ENCODE measurements at regions of chr4 and their contacts with region 1.

Region 1: DNA sequence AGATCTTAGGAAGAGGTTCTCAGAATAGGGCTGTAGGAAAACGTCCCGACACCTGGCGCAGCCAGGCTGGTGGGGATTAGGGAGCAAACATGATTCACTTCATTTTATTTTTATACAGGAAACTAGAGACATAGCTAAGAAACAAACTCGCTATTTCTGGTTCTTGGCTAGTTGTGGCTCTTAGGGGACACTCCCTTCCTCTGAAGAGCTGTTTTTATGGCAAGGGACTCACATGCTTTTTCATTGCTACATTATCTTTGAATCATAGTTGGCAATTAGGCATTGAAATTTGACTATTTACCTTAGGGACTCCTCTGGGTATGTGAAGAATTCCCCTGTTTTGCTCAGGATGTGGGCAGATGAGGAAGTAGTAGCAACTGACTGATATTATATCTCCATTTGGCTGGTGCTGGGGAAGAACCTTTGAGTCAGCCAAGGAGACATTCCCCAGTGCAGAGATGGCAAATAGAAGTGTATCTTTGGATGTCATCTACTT is 174.5 kb downstream of the SMIM20 start:
- DNase-seq: peak; percentile 23 to 49
- ATAC-seq: peak; percentile 66
- H3K4me3 ChIP-seq: no peak overlapping the region
- H3K27ac ChIP-seq: peak overlapping the region; percentile 53 to 67 (median 60)
- H3K4me1 ChIP-seq: peaks cover 26 to 36% of the 10 kb centered on the region in 2 donors
- H3K27me3 ChIP-seq: no peaks in the 10 kb centered on the region
- CTCF ChIP-seq: no peak
- POLR2A ChIP-seq: no peak

Region 2: DNA sequence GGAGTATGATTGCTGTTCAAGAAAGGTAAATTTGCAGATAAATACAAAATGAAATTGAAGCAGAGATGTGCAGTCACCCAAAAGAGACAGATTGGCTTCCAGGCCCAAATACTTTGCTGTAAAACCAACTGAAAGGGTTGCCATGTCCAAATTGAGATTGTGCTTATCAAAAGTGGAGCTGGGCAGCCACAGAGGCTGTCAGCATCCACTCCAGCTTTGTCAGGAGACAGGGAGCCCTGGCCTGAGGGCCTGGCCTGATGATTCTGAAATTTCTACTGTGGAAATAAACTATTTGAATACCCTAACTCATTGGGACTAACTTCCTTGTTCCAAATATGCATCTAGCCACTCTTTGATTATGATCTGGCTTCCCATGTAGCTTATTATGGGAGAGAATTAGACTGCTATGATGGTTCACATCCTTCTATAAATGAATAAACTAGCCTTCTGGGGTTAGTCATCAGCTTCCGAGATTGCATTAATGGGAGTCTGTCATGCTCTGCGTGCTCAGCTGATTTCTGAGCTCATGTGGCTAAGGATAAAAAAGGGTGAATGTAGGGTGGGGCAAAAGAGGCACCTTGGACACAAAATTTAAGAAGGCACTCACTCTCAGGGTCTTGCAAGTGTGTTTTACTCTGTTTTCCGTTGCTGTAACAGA is 384.6 kb before region 1 on chr4:
- in situ Hi-C with region 1: no loop called
- intact Hi-C with region 1: no loop called
- DNase-seq: no peak
- ATAC-seq: no peak
- H3K4me3 ChIP-seq: no peak overlapping the region
- H3K27ac ChIP-seq: no peak overlapping the region
- H3K4me1 ChIP-seq: no peaks in the 10 kb centered on the region
- H3K27me3 ChIP-seq: no peaks in the 10 kb centered on the region
- CTCF ChIP-seq: no peak
- POLR2A ChIP-seq: no peak

Region 3: GRCh38 chr4:26204911-26205370 is 116.5 kb after region 1 on chr4:
- in situ Hi-C with region 1: no loop called
- intact Hi-C with region 1: loop called (anchors 5 kb)
- DNase-seq: peak; percentile 47 to 87
- ATAC-seq: peak; percentile 81 to 88
- H3K4me3 ChIP-seq: no peak overlapping the region
- H3K27ac ChIP-seq: peak overlapping the region; percentile 16 to 61 (median 38)
- H3K4me1 ChIP-seq: peaks cover 16 to 21% of the 10 kb centered on the region in 2 donors
- H3K27me3 ChIP-seq: no peaks in the 10 kb centered on the region
- CTCF ChIP-seq: no peak
- POLR2A ChIP-seq: no peak

Region 4: GRCh38 chr4:26362745-26363439 is 274.4 kb after region 1 on chr4:
- in situ Hi-C with region 1: no loop called
- intact Hi-C with region 1: no loop called
- DNase-seq: no peak
- ATAC-seq: no peak
- H3K4me3 ChIP-seq: no peak overlapping the region
- H3K27ac ChIP-seq: no peak overlapping the region
- H3K4me1 ChIP-seq: peaks cover 18 to 32% of the 10 kb centered on the region in 2 donors
- H3K27me3 ChIP-seq: no peaks in the 10 kb centered on the region
- CTCF ChIP-seq: no peak
- POLR2A ChIP-seq: no peak

Region 5: DNA sequence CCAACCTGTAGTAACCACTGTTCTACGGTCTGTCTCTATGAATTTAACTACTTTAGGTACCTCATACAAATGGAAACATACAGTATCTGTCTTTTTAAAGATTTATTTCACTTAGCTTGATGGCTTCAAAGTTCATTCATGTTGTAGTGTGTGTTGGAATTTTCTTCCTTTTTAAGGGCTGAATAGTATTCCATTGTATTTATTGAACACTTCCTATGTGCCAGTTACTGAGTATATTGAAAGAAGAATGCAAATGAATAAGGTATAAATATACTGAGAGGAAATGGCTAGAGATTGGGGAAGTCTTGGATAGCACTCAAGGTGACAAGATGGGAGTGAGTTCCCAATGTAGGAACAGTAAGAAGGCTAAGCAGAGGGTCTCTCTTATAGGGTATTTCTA is 512.7 kb after region 1 on chr4:
- in situ Hi-C with region 1: no loop called
- intact Hi-C with region 1: no loop called
- DNase-seq: no peak
- ATAC-seq: no peak
- H3K4me3 ChIP-seq: no peak overlapping the region
- H3K27ac ChIP-seq: no peak overlapping the region
- H3K4me1 ChIP-seq: no peaks in the 10 kb centered on the region
- H3K27me3 ChIP-seq: no peaks in the 10 kb centered on the region
- CTCF ChIP-seq: no peak
- POLR2A ChIP-seq: no peak